ENCODE measurements at regions of chr15 and their contacts with region 1.

Region 1: GRCh38 chr15:92087211-92087610 is 233.7 kb downstream of the SLCO3A1 start:
- DNase-seq: no peak
- H3K4me3 ChIP-seq: no peak overlapping the region
- H3K27ac ChIP-seq: no peak overlapping the region
- H3K4me1 ChIP-seq: no peaks in the 10 kb centered on the region
- H3K27me3 ChIP-seq: no peaks in the 10 kb centered on the region
- CTCF ChIP-seq: no peak
- POLR2A ChIP-seq: no peak

Region 2: DNA sequence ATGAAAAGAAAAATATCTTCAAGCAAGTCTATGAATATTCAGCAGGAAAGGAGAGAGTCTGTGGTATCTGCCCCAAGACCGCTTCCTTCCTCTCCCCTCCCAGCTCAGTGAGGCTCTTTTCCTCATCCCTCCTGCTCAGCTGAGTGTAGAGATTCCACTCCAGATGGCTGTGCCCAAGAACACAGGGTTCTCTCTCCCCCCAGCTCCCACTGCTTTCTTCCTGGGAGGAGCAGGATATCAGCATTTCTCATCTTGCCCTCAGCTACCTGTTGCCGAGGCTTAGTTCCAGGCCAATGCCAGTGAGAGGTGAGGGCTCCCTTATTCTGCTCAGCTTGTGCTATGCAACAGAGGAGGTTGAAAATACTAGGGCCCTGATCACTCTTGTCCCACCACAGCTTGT is 775.2 kb before region 1 on chr15:
- intact Hi-C with region 1: loop called (anchors 5 kb)
- DNase-seq: no peak
- H3K4me3 ChIP-seq: no peak overlapping the region
- H3K27ac ChIP-seq: no peak overlapping the region
- H3K4me1 ChIP-seq: no peaks in the 10 kb centered on the region
- H3K27me3 ChIP-seq: no peaks in the 10 kb centered on the region
- CTCF ChIP-seq: no peak
- POLR2A ChIP-seq: no peak

Region 3: DNA sequence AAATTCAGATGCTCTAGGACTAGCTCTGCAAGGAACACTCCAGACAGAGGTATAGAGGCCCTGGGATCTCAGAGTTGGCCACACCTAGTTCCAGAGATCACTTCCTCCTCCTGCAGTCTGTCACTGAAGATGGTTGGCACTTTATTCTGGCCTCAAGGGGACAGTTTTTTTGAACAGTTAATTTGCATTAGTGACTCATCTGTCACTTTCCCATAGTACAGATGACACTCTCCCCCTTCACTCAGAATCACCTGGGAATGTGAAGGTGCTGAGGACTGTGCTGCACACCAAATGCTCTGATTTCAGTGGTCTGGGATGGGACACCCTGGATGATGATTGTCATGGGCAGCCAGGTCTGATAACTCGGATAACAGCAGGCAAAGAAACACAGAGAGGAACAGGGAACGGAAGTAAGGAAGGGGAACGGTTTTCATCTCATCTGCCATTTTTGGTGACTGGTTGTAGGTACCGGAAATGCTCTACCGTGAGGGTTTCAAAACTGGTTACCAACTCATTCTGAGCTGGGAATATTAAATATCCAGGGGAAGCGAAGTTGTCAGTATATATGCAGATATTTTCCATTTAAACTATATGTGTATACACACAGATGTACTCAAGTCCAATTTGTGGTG is 73.9 kb after region 1 on chr15:
- intact Hi-C with region 1: no loop called
- DNase-seq: no peak
- H3K4me3 ChIP-seq: no peak overlapping the region
- H3K27ac ChIP-seq: no peak overlapping the region
- H3K4me1 ChIP-seq: no peaks in the 10 kb centered on the region
- H3K27me3 ChIP-seq: no peaks in the 10 kb centered on the region
- CTCF ChIP-seq: no peak
- POLR2A ChIP-seq: no peak